ENCODE measurements at regions of chr19 and their contacts with region 1.

Region 1: DNA sequence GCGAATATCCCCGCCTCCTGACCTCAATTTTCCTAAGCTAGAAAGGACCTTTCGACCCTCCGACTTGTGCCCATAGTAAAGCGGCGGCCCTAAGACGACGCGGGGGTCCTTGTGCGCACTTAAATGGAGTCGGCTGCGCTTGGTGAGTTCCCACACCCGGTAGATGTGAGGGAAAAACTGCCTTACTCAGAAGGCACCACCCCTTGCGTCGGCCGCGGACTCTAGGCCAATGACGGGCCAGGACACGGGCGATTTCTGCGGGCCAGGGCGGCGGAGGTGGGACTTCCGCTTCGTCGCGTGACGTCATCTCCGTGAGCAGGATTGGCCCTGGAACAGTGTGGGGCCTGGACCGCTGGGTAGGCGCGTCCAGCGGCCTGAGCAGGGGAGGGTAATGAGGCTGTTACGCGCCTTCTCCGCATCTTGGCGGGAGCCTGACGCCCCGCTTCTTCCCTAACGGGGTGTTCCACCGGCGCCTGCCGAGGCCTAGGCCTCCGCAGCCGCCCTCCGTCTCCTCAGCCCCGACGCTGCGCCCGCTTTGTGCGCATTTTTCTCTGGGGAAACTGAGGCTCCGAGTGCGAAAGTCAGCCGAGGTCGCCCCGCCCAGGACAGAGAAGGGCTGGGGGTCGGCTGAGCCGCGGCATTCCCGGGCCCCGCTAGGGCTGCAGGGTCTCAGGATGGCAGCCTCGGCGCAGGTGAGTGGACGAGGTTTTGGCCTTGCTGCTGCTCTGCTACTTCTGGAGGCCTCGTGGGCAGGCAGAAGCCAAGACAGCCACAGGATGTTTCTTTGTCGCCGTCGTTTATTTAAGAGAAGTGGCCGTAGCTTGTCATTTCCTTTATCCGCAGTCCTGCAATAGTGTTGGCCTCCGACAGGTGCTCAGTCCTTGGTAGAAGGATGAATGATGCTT is at the start of gene ZNF543:
- DNase-seq: peak; percentile 97 to 98 (median 98)
- ATAC-seq: peak; percentile 99 to 100 (median 100)
- H3K4me3 ChIP-seq: peak within 1 kb of the TSS; percentile 74 to 96 (median 87)
- H3K27ac ChIP-seq: peak within 1 kb of the TSS; percentile 66 to 96 (median 91)
- H3K4me1 ChIP-seq: peaks cover 0 to 33% (median 20%) of the 10 kb centered on the region in 12 donors
- H3K27me3 ChIP-seq: peaks cover 0 to 28% (median 0%) of the 10 kb centered on the region in 9 donors
- CTCF ChIP-seq: no peak
- POLR2A ChIP-seq: peak; percentile 65 to 90
- total RNA-seq, gene ZNF543: 4.3 to 9.1 (median 7.1) TPM

Region 2: GRCh38 chr19:57279418-57280066 is 40.9 kb before region 1 on chr19:
- intact Hi-C with region 1: loop called in 4 of 10 experiments (anchors 2 to 5 kb)
- DNase-seq: peak; percentile 92 to 95 (median 92)
- ATAC-seq: peak; percentile 96 to 98 (median 97)
- H3K4me3 ChIP-seq: peak overlapping the region; percentile 68 to 99 (median 92)
- H3K27ac ChIP-seq: peak overlapping the region; percentile 94 to 100 (median 99)
- H3K4me1 ChIP-seq: peaks cover 8 to 44% (median 29%) of the 10 kb centered on the region in 12 donors
- H3K27me3 ChIP-seq: no peaks in the 10 kb centered on the region
- CTCF ChIP-seq: peak in 10 of 12 donors; percentile 11 to 66 (median 46)
- POLR2A ChIP-seq: peak in 1 of 2 donors; percentile 54

Region 3: DNA sequence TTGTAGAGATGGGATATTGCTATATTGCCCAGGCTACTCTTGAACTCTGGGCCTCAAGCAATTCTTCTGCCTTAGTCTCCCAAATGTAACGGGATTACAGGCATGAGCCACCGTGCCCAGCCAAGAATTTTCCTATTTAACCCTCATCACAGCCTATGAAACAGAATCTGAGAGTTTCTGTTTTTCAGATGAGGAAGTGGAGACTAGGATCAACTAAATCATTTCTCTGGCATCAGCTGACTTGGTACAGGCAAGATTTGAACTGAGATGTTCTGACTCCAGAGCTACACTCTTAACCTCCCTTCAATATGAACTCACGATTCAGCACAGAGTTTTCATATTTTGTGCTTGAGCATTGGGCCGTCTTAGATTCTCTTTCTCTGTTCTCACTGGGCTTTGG is 32.1 kb before region 1 on chr19:
- intact Hi-C with region 1: loop called in 3 of 10 experiments (anchors 5 kb)
- DNase-seq: no peak
- ATAC-seq: no peak
- H3K4me3 ChIP-seq: no peak overlapping the region
- H3K27ac ChIP-seq: no peak overlapping the region
- H3K4me1 ChIP-seq: peaks cover 0 to 28% (median 8%) of the 10 kb centered on the region in 12 donors
- H3K27me3 ChIP-seq: no peaks in the 10 kb centered on the region
- CTCF ChIP-seq: no peak
- POLR2A ChIP-seq: no peak

Region 4: DNA sequence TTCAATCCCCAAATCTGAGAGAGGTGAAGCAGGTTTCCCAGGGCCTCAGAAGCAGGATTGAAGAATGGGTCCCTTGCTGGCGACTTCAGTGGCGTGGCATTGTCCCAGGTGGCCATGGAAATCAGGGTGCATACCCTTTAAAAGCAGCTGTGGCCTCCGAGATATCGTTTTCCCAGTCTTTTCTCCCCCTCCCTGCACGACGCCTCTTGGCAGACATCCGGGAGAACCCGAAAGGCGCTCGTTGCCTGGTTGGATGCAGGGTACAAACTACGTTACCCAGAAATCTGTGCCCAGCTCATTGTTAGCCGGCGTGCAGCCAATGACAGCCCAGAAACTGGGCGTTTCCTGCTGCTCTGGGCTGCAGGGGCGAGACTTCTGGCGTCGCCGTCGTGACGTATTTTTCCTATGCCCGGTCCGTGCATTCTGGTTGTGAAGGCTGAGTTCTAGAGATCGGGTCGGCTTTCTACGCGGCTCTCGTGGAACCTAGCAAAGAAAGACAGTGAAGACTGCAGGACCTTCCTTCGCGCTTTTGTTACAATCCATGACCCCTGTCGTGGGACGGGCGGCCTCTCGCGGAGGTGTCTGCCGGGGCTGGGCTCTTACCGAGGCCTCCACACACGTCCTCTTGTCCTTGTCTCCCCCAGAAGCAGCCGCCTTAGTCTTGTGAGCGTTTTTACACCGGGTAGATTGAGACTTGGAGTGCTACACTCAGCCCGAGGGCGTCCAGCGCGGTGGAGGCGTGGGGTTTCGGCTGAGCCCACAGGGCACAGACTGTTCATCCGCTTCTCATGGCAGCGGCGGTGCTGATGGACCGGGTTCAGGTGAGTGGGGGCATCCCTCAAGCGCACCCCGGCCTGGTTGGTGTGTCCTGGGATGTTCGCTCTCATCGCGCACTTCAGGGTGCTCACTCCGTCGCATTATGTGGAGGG is 30.7 kb after region 1 on chr19 and contains the start of gene ZNF304:
- intact Hi-C with region 1: loop called in 3 of 10 experiments (anchors 1 to 5 kb)
- DNase-seq: peak; percentile 95 to 97 (median 96)
- ATAC-seq: peak; percentile 97 to 99 (median 98)
- H3K4me3 ChIP-seq: peak within 1 kb of the TSS; percentile 75 to 100 (median 92)
- H3K27ac ChIP-seq: peak within 1 kb of the TSS; percentile 41 to 91 (median 86)
- H3K4me1 ChIP-seq: peaks cover 0 to 44% (median 21%) of the 10 kb centered on the region in 12 donors
- H3K27me3 ChIP-seq: no peaks in the 10 kb centered on the region
- CTCF ChIP-seq: no peak
- POLR2A ChIP-seq: peak in 1 of 2 donors; percentile 43
- total RNA-seq, gene ZNF304: 7.0 to 14.5 (median 9.7) TPM

Region 5: GRCh38 chr19:57362997-57363705 is 42.7 kb after region 1 on chr19 and contains the starts of genes TRAPPC2B and ZNF547:
- intact Hi-C with region 1: loop called in 4 of 10 experiments (anchors 5 kb)
- DNase-seq: peak; percentile 99 to 100 (median 99)
- ATAC-seq: peak; percentile 94 to 97 (median 96)
- H3K4me3 ChIP-seq: peak within 1 kb of the TSS; percentile 62 to 97 (median 82)
- H3K27ac ChIP-seq: peak within 1 kb of the TSS; percentile 83 to 98 (median 94)
- H3K4me1 ChIP-seq: peaks cover 0 to 37% (median 20%) of the 10 kb centered on the region in 12 donors
- H3K27me3 ChIP-seq: no peaks in the 10 kb centered on the region
- CTCF ChIP-seq: no peak
- POLR2A ChIP-seq: peak in 1 of 2 donors; percentile 68
- total RNA-seq, gene TRAPPC2B: 7.4 to 35.0 (median 12.3) TPM
- total RNA-seq, gene ZNF547: 1.9 to 3.7 (median 2.6) TPM

Region 6: DNA sequence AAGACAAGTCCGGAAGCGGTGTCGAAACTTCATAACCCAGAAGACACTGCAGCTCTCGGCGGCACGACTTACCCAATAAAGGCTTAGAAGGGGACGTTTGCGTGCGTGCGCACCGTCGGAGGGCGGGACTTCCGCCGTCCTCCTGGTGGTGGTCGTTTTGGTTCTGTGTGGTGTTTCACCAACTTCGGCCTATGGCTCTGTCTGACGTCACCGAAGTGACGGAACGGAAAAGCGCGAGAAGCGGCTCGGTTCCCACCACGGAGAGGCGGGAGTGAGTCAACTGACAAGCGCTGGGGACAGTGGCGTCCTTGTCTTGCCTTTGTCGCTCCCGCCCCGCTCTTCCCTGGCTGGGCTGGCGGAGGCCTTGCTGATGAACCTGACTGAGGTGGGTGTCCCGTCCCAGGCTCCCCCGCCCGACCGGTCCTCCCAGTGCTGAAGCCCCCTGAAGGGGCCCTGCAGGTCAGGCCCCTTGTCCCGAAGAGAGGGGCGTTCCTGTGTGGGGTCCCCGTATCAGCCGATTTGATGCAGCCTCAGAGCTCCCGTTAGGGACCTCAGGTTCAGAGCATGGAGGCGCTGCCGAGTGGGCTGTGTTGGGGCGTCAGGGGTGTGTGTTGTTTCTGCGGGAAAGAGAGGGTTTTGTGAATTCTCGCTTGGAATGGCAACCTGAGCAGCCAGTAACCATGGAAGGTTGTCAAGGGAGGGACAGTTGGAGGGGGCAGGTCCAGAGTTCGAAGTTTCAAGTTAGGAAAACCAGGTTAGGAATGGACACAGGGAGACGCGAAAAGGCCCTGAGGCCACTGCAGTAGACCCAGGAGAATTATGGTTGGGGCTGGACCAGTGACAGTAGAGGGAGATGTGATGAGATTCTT is 69.5 kb after region 1 on chr19 and contains the start of gene ZNF548:
- intact Hi-C with region 1: loop called in 1 of 10 experiments (anchors 2 kb)
- DNase-seq: peak; percentile 96 to 98 (median 97)
- ATAC-seq: peak; percentile 99 to 100 (median 100)
- H3K4me3 ChIP-seq: peak within 1 kb of the TSS; percentile 69 to 97 (median 82)
- H3K27ac ChIP-seq: peak within 1 kb of the TSS; percentile 82 to 98 (median 89)
- H3K4me1 ChIP-seq: peaks cover 0 to 27% (median 17%) of the 10 kb centered on the region in 12 donors
- H3K27me3 ChIP-seq: no peaks in the 10 kb centered on the region
- CTCF ChIP-seq: peak in 8 of 12 donors; percentile 8 to 49 (median 28)
- POLR2A ChIP-seq: peak; percentile 42 to 52
- total RNA-seq, gene ZNF548: 11.6 to 20.3 (median 15.3) TPM

Region 7: GRCh38 chr19:57452307-57452706 is 131.9 kb after region 1 on chr19:
- intact Hi-C with region 1: no loop called
- DNase-seq: no peak
- ATAC-seq: no peak
- H3K4me3 ChIP-seq: no peak overlapping the region
- H3K27ac ChIP-seq: no peak overlapping the region
- H3K4me1 ChIP-seq: no peaks in the 10 kb centered on the region
- H3K27me3 ChIP-seq: no peaks in the 10 kb centered on the region
- CTCF ChIP-seq: no peak
- POLR2A ChIP-seq: no peak

Region 8: GRCh38 chr19:57515234-57515633 is 194.8 kb after region 1 on chr19:
- intact Hi-C with region 1: no loop called
- DNase-seq: no peak
- ATAC-seq: no peak
- H3K4me3 ChIP-seq: no peak overlapping the region
- H3K27ac ChIP-seq: no peak overlapping the region
- H3K4me1 ChIP-seq: no peaks in the 10 kb centered on the region
- H3K27me3 ChIP-seq: no peaks in the 10 kb centered on the region
- CTCF ChIP-seq: no peak
- POLR2A ChIP-seq: no peak

Measured in heart left ventricle (tissue), 16 donors.